Panc1 (cell line): ENCODE measurements at regions of chr13 and their contacts with region 1.

Region 1: DNA sequence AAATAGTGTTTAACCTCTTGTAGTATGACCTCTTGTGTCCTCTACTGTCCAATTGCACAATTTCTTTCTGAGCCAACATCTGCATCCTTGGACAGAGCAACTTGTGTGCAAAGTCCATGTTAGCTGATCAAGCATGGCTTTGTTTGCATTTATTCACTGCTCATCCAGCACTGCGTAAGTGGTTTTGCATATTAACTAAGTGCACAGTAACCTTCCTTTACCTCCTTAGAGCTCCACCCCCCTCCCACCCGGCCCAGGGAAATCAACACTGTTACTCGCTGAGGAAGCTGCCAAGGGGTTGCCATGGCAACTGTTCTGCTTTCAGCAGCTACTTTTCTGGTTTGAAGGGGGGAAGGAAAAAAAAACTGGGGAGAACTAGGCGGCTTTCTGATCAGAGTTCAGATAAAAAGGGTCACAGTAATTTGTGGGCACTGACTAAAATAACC is 153.5 kb upstream of the KLF12 start:
- DNase-seq: no peak
- ATAC-seq: no peak
- H3K4me3 ChIP-seq: no peak overlapping the region
- H3K27ac ChIP-seq: no peak overlapping the region
- H3K4me1 ChIP-seq: no peaks in the 10 kb centered on the region
- H3K27me3 ChIP-seq: no peaks in the 10 kb centered on the region
- CTCF ChIP-seq: no peak

Region 2: DNA sequence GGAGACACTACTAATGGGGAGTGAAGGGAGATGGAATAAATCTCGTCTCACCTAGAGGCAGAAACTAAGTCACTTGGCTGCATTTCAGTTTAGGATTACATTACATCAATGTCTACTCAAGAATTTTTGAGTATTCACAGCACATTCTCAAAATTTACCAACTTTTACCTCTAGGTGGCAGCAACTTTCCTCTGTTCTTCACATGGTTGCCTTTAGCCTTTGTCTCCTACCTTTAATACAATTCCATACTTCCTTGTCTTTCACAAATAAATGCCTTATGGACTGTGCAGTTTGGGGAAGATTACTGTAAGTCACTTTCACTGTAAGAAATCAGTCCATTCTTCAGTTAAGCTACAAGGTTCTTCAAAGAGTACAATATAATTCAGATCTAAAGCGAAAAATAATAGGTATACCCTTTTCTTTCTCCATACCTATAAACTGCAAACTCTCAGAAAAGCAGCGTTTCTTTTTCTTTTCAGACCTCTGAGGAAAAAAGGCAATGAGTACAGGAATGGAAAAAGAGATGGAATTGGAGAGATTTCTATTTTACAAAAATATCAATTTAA is 532.9 kb before region 1 on chr13:
- CTCF ChIA-PET with region 1: no interaction called
- POLR2A ChIA-PET with region 1: no interaction called
- in situ Hi-C with region 1: no loop called
- intact Hi-C with region 1: loop called (anchors 5 kb)
- DNase-seq: peak; percentile 22
- ATAC-seq: peak; percentile 73; the same call in 1 of the 2 replicates
- H3K4me3 ChIP-seq: no peak overlapping the region
- H3K27ac ChIP-seq: no peak overlapping the region
- H3K4me1 ChIP-seq: no peaks in the 10 kb centered on the region
- H3K27me3 ChIP-seq: no peaks in the 10 kb centered on the region
- CTCF ChIP-seq: peak; percentile 58; the same call in 1 of the 2 replicates